Dorsolateral prefrontal cortex (tissue), 120 donors: ENCODE measurements at regions of chr7 and their contacts with region 1.

Region 1: GRCh38 chr7:97179454-97180104 is 62.1 kb downstream of the SDHAF3 start:
- DNase-seq: peak in 2 of 10 donors; percentile 16 to 34
- H3K4me3 ChIP-seq: peak overlapping the region in 1 of 59 donors; percentile 3
- H3K27ac ChIP-seq: no peak overlapping the region
- H3K27me3 ChIP-seq: no peaks in the 10 kb centered on the region
- CTCF ChIP-seq: peak; percentile 43 to 89 (median 82)

Region 2: DNA sequence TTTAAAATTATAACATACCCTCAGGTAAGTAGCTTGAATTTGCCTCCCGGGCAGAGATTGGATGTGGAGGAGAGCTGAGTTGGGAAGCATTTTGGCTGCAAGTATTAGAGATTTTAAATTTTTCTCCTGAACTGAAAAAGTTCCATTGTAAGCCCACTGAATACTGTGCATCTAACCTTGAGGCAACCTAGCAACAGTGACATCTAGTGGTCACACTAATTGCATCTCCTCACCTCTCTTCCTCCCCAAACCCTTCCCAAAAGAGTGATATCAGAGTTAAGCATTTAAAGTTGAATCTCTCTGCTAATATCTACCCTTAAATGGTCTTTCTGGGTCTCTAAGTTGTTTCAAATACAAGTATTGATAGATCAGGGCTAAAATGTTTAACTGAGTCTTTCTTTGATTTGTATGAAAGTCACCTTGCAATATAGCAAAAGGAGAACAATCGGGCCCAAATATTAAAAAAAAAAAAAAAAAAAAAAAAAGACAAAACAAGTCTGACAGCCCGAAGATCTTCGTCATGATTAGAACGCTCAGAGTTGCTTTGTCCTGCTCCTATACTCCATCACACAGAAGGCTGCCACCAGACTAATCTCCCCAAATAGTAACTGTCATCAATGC is 114.5 kb before region 1 on chr7:
- intact Hi-C with region 1: no loop called
- DNase-seq: peak in 1 of 10 donors; percentile 11
- H3K4me3 ChIP-seq: no peak overlapping the region
- H3K27ac ChIP-seq: no peak overlapping the region
- H3K27me3 ChIP-seq: no peaks in the 10 kb centered on the region
- CTCF ChIP-seq: peak; percentile 48 to 83 (median 70)

Region 3: DNA sequence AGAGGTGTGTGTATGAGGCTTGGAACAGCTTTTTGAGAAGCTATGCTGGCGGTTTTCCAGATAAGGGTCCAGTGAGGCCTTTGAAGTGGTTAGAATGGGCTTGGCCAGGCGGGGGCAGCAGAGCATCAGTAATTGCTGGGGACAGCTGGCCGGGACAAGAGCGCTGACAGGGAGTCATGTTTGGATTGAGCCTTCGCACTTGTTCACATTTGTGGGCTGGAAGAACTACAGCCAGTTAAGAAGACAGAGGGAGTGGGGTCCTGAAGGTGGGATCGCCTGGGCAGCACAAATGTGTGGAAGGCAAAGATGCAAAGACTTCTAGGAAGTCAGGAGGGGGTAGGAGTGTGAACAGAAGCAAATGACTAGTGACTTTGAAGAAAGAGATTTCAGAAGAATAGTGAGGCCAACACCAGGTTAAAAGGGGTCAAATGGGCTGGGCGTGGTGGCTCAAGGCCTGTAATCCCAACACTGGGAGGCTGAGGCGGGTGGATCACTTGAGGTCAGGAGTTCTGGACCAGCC is 74.8 kb before region 1 on chr7:
- intact Hi-C with region 1: loop called (anchors 5 to 10 kb)
- DNase-seq: peak; percentile 61 to 83 (median 74)
- H3K4me3 ChIP-seq: no peak overlapping the region
- H3K27ac ChIP-seq: no peak overlapping the region
- H3K27me3 ChIP-seq: no peaks in the 10 kb centered on the region
- CTCF ChIP-seq: peak; percentile 21 to 93 (median 76)

Region 4: DNA sequence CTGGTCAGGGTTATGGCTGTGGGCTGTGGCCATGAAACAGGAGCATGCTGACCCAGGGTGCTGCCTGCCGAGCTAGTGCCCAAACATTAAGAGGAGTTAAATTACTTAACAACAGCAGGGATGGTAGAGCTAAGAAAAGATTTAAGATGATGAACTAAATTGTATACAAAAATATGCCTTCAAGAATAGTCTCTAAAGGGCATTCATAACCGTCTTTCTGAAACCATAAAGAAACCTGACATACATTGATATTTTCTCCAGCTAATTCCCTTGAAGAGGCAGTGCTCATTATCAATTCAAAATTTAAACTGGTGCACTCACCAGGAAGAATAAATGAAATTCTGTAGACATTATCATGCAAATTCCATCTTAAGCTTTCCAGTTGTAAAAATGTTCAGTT is 286.5 kb after region 1 on chr7:
- intact Hi-C with region 1: no loop called
- DNase-seq: no peak
- H3K4me3 ChIP-seq: no peak overlapping the region
- H3K27ac ChIP-seq: no peak overlapping the region
- H3K27me3 ChIP-seq: peaks cover 0 to 32% (median 3%) of the 10 kb centered on the region in 45 donors
- CTCF ChIP-seq: no peak